GM23248 (cell line): ENCODE measurements at regions of chr13 and their contacts with region 1.

Region 1: GRCh38 chr13:109778102-109778542 is 8.3 kb downstream of the IRS2 start:
- DNase-seq: peak; percentile 31
- H3K4me3 ChIP-seq: peak overlapping the region; percentile 84; the same call in 1 of the 2 replicates
- H3K27ac ChIP-seq: no peak overlapping the region
- H3K4me1 ChIP-seq: peaks cover 50% of the 10 kb centered on the region
- H3K27me3 ChIP-seq: no peaks in the 10 kb centered on the region

Region 2: GRCh38 chr13:109145631-109146030 is 632.5 kb before region 1 on chr13:
- in situ Hi-C with region 1: loop called (anchors 10 kb)
- DNase-seq: peak; percentile 86
- H3K4me3 ChIP-seq: no peak overlapping the region
- H3K27ac ChIP-seq: no peak overlapping the region
- H3K4me1 ChIP-seq: peaks cover 26% of the 10 kb centered on the region
- H3K27me3 ChIP-seq: peaks cover 17% of the 10 kb centered on the region; the same call in 1 of the 2 replicates

Region 3: GRCh38 chr13:109586509-109587346 is 191.4 kb before region 1 on chr13:
- in situ Hi-C with region 1: no loop called
- DNase-seq: no peak
- H3K4me3 ChIP-seq: no peak overlapping the region
- H3K27ac ChIP-seq: no peak overlapping the region
- H3K4me1 ChIP-seq: no peaks in the 10 kb centered on the region
- H3K27me3 ChIP-seq: peaks cover 81% of the 10 kb centered on the region

Region 4: GRCh38 chr13:111359237-111359915 is 1581.3 kb after region 1 on chr13:
- in situ Hi-C with region 1: no loop called
- DNase-seq: peak; percentile 34
- H3K4me3 ChIP-seq: no peak overlapping the region
- H3K27ac ChIP-seq: no peak overlapping the region
- H3K4me1 ChIP-seq: no peaks in the 10 kb centered on the region
- H3K27me3 ChIP-seq: peaks cover 45% of the 10 kb centered on the region